Panc1 (cell line): ENCODE measurements at regions of chr19 and their contacts with region 1.

Region 1: GRCh38 chr19:46000491-46001246 is 5.4 kb downstream of the CCDC61 start:
- DNase-seq: no peak
- ATAC-seq: peak; percentile 66
- H3K4me3 ChIP-seq: peak overlapping the region in 1 of 2 experiments; percentile 20; a peak in 1 of 4 replicates
- H3K27ac ChIP-seq: no peak overlapping the region
- H3K4me1 ChIP-seq: peaks cover 4% of the 10 kb centered on the region
- H3K27me3 ChIP-seq: no peaks in the 10 kb centered on the region
- CTCF ChIP-seq: no peak

Region 2: DNA sequence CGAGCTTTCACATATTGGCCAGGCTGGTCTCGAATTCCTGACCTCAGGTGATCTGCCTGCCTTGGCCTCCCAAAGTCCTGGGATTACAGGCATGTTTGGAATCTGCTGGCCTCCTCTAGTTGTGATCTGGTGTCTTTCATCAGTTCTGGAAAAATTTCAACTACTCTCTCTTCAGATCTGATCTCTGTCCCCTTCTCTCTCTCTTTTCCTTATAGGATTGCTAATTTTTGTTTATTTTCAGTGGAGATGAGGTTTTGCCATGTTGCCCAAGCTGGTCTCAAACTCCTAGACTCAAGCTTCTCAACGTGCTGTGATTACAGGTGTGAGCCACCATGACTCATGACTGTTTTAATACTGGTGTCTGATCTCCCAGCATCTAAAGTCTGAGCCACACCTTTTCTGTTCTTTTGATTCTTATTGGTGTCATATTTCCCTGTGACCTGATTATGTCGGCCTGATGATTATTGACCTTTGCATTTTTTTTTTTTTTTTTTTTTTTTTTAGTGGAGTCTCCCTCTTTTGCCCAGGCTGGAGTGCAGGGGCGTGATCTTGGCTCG is 75.7 kb before region 1 on chr19:
- CTCF ChIA-PET with region 1: interaction called, 10 read pairs
- POLR2A ChIA-PET with region 1: no interaction called
- in situ Hi-C with region 1: no loop called
- intact Hi-C with region 1: no loop called
- DNase-seq: no peak
- ATAC-seq: no peak
- H3K4me3 ChIP-seq: no peak overlapping the region
- H3K27ac ChIP-seq: no peak overlapping the region
- H3K4me1 ChIP-seq: 0 out of 2 replicates have a peak, but pooled peaks cover 3% of the 10 kb centered on the region
- H3K27me3 ChIP-seq: no peaks in the 10 kb centered on the region
- CTCF ChIP-seq: no peak